Activated T-helper 1 cell treated with anti-CD3 and anti-CD28 coated beads, Interleukin-12 subunit alpha, Interleukin-12 subunit beta, Interleukin-2, Interleukin-4 antibody, amounts not matched to agents 30 ng/mL and 10 ng/mL and 1 ng/mL, durations not matched to agents 14 hours and 24 hours and 36 hours (primary cell): ENCODE measurements at regions of chr9 and their contacts with region 1.

Region 1: GRCh38 chr9:123268240-123268949 is at the start of gene STRBP:
- DNase-seq: peak; percentile 91
- H3K4me3 Mint-ChIP-seq: peak within 1 kb of the TSS; percentile 86
- H3K27ac Mint-ChIP-seq: peak within 1 kb of the TSS; percentile 53
- H3K4me1 Mint-ChIP-seq: peaks cover 6% of the 10 kb centered on the region
- H3K27me3 Mint-ChIP-seq: peaks cover 7% of the 10 kb centered on the region
- total RNA-seq, gene STRBP: 22.1 and 24.2 TPM in 2 replicates

Region 2: GRCh38 chr9:122940603-122941559 is 327.5 kb before region 1 on chr9 and contains the start of gene RABGAP1:
- intact Hi-C with region 1: loop called (anchors 2 kb)
- DNase-seq: peak; percentile 97
- H3K4me3 Mint-ChIP-seq: peak within 1 kb of the TSS; percentile 98
- H3K27ac Mint-ChIP-seq: peak within 1 kb of the TSS; percentile 76
- H3K4me1 Mint-ChIP-seq: peaks cover 27% of the 10 kb centered on the region
- H3K27me3 Mint-ChIP-seq: peaks cover 1% of the 10 kb centered on the region
- total RNA-seq, gene RABGAP1: 26.6 and 30.2 TPM in 2 replicates

Region 3: GRCh38 chr9:123081824-123082223 is 186.6 kb before region 1 on chr9:
- intact Hi-C with region 1: loop called (anchors 5 kb)
- DNase-seq: no peak
- H3K4me3 Mint-ChIP-seq: no peak overlapping the region
- H3K27ac Mint-ChIP-seq: no peak overlapping the region
- H3K4me1 Mint-ChIP-seq: no peaks in the 10 kb centered on the region
- H3K27me3 Mint-ChIP-seq: no peaks in the 10 kb centered on the region

Region 4: DNA sequence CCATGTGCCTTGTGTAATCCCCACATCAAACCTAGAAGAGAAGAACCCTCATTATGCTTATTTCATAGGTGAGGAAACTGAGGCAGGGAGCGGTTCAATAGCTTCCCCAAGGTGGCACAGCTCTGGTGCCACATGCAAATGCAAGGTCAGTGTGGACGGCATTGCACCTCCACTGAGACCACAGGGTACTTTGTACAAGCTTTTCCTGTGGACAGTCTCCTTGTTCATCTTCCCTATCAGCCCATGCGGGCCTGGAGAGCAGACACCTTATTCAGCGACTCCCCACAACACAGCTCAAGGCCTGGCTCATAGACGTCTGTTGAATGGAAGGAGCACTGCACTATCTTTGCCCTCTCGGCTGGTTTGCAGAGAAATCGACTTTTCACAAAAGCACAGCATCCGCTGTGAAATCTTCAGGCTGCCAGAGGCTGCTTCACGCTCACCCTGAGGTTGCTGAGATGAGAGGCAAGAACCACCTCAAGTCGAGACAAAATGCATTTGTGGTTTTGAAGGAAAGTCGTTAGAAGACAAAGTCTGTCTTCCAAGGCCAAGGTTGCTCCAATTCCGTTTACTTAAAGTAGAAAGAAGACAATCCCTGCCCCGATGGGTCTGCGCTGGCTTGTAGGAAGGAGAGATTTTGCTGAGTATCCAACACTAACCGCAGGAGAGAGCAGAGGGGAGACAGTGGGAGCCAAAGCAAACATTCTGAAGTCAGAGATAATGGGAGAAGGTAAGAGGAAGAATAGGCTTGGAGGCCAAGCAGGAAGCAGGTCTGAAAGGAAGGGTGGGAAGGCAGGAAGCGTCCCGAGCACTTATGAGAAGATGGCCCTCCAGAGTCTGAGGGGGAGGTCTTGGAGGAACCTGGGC is 34.2 kb after region 1 on chr9:
- intact Hi-C with region 1: loop called (anchors 5 kb)
- DNase-seq: peak; percentile 8
- H3K4me3 Mint-ChIP-seq: no peak overlapping the region
- H3K27ac Mint-ChIP-seq: peak overlapping the region; percentile 31
- H3K4me1 Mint-ChIP-seq: peaks cover 18% of the 10 kb centered on the region
- H3K27me3 Mint-ChIP-seq: no peaks in the 10 kb centered on the region

Region 5: DNA sequence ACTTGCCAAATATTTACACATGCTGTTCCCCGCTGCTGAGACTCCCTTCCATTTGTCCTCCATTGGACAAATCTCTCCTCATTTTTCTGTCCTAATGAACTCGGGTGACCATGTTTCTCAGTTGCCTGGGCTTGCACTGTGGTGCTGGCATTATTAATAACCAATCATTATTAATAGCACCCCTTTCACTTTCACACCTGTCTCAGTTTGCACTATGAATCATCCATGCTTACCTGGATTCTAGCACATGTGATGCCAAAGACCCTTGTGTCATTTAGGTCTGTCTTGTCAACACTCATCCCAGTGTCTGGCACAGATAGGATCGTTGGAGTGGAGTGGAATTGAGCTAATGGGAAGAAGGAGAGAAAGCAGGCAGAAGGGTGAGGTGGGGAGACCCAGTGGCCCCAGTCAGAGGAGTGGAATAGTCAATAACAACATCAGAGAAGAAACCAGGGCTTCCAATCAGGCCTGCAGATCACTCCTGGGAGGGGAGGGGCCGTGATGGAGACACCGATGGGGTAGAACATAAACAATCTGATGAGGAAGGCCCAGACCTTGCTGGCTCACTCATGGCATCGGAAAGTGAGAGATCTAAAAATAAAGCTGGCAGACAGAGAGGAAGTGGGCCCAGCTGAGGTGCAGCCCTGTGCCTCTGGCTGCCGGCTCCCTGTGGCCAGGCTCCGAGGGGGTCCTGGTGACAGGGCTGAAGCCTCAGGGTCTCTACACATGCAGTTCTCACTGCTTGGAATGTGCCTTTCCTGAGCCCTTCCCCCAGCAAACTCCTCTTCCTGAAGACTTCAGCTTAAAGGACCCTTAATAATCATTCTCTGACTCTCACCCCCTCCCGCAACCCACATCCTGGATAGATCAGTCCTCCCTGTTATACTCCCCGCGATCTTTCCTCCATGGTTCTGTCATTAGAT is 54.1 kb after region 1 on chr9:
- intact Hi-C with region 1: loop called (anchors 1 kb)
- DNase-seq: peak; percentile 51
- H3K4me3 Mint-ChIP-seq: peak overlapping the region; percentile 70
- H3K27ac Mint-ChIP-seq: peak overlapping the region; percentile 80
- H3K4me1 Mint-ChIP-seq: peaks cover 37% of the 10 kb centered on the region
- H3K27me3 Mint-ChIP-seq: peaks cover 6% of the 10 kb centered on the region